Heart right ventricle (tissue), 16 donors: ENCODE measurements at regions of chr6 and their contacts with region 1.

Region 1: DNA sequence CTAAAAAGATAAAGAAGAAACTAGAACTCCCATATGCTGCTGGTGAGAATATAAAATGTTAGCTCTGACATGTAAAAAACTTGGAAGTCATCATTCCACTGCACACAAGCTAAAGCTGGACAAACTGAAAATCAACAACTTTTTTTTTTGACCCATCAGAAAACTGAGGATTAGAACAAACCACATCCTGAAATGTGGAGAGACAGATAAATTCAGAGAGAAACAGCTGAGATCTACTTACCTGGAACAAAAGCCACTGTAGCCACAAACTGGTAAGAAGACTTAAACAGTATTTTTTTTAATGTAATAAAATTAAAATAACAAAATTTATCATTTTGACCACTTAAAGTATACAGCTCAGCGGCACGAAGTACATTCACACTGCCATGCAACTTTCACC is 408.5 kb upstream of the RGS17 start:
- DNase-seq: no peak
- ATAC-seq: no peak
- H3K4me3 ChIP-seq: no peak overlapping the region
- H3K27ac ChIP-seq: no peak overlapping the region
- H3K4me1 ChIP-seq: no peaks in the 10 kb centered on the region
- H3K27me3 ChIP-seq: no peaks in the 10 kb centered on the region
- CTCF ChIP-seq: no peak

Region 2: DNA sequence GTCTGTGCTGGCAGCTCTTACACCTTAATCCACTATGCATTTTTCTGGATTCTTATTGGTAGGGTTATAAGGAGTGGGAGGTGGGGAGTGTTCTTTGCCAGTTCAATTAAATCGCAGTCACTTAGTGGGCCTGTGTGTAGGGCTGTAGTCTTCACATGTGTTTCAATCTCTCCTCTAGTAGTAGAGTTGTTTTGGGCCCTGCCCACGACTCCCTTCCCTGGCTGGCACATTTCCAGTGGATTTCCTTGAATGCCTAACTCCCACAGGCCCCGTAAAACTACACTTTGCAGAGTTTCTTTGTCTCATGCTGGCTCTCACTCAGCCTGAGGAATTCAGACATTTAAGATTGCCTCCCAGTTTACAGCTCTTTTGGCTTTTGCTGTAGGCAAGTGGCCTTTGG is 85.5 kb after region 1 on chr6:
- intact Hi-C with region 1: no loop called
- DNase-seq: peak in 1 of 2 donors; percentile 56
- ATAC-seq: peak in 2 of 8 donors; percentile 7 to 30
- H3K4me3 ChIP-seq: no peak overlapping the region
- H3K27ac ChIP-seq: no peak overlapping the region
- H3K4me1 ChIP-seq: peaks cover 0 to 9% (median 0%) of the 10 kb centered on the region in 9 donors
- H3K27me3 ChIP-seq: no peaks in the 10 kb centered on the region
- CTCF ChIP-seq: no peak

Region 3: DNA sequence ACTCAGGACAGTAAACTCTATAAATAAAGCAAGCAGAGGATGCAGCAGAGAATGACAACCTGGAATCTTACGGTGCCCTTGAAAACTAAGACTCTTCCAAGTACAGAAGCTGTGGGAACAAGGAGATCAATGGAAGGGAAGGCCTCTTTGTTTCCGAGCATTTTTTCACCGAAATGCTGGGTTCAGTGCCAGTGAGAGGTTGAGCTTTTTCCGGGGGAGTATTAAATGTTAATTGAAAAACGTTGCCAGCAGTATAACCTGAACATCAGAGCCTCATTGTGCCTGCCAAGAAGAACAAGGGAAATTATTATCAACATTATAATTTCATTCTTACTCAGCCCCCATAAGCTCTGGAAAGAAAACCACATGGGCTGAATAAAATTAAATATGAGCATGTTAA is 516.9 kb after region 1 on chr6:
- intact Hi-C with region 1: loop called in 1 of 10 experiments (anchors 10 kb)
- DNase-seq: no peak
- ATAC-seq: no peak
- H3K4me3 ChIP-seq: no peak overlapping the region
- H3K27ac ChIP-seq: no peak overlapping the region
- H3K4me1 ChIP-seq: no peaks in the 10 kb centered on the region
- H3K27me3 ChIP-seq: no peaks in the 10 kb centered on the region
- CTCF ChIP-seq: no peak